H1 (cell line): ENCODE measurements at regions of chr7 and their contacts with region 1.

Region 1: GRCh38 chr7:123494193-123494796 is 40.1 kb downstream of the IQUB start:
- DNase-seq: no peak
- H3K4me3 ChIP-seq: no peak overlapping the region
- H3K27ac ChIP-seq: no peak overlapping the region
- H3K4me1 ChIP-seq: no peaks in the 10 kb centered on the region
- H3K27me3 ChIP-seq: no peaks in the 10 kb centered on the region
- CTCF ChIP-seq: peak in 2 of 3 experiments; percentile 30 to 41; a peak in 2 of 4 replicates
- EP300 ChIP-seq: no peak
- POLR2A ChIP-seq: no peak
- RAD21 ChIP-seq: peak in 1 of 2 experiments; percentile 72

Region 2: DNA sequence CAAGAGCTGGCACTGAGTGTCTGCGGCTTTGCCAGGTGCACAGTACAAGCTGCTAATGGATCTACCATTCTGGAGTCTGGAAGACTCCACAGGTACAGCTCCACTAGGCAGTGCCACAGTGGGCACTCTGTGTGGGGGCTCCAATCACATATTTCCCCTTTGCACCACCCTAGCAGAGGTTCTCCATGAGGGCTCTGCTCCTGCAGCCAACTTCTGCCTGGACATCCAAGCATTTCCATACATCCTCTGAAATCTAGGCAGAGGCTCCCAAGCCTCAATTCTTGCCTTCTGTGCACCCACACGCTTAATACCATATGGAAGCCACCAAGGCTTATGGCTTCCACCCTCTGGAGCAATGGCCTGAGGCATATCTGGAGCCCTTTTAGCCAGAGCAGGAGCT is 10.9 kb after region 1 on chr7:
- CTCF ChIA-PET with region 1: interaction called, 15 read pairs
- POLR2A ChIA-PET with region 1: no interaction called
- DNase-seq: no peak
- H3K4me3 ChIP-seq: no peak overlapping the region
- H3K27ac ChIP-seq: no peak overlapping the region
- H3K4me1 ChIP-seq: peaks cover 0 to 6% (median 0%) of the 10 kb centered on the region in 4 experiments; a peak in 2 of 7 replicates
- H3K27me3 ChIP-seq: no peaks in the 10 kb centered on the region; a peak in 1 of 7 replicates
- CTCF ChIP-seq: no peak
- EP300 ChIP-seq: no peak
- POLR2A ChIP-seq: no peak
- RAD21 ChIP-seq: no peak

Region 3: DNA sequence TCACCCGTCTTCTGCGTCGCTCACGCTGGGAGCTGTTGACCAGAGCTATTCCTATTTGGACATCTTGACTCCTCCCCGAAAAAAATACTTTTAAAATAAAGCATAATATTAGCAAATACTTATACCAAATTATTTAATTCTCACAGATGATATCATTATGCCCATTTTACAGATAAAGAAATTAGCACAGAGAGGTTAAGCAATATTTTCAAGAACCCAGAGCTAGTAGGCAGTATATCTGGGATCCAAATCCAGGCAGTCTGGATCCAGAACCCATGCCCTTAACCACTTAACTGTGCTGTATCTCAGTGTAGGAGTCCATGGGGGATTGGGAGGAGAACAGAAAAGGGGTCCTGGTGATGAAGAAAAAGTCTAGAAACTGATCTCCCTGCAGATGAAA is 34.0 kb after region 1 on chr7:
- CTCF ChIA-PET with region 1: interaction called, 11 read pairs
- POLR2A ChIA-PET with region 1: no interaction called
- DNase-seq: no peak
- H3K4me3 ChIP-seq: no peak overlapping the region
- H3K27ac ChIP-seq: no peak overlapping the region
- H3K4me1 ChIP-seq: peaks cover 0 to 3% (median 0%) of the 10 kb centered on the region in 4 experiments; a peak in 3 of 7 replicates
- H3K27me3 ChIP-seq: no peaks in the 10 kb centered on the region; a peak in 1 of 7 replicates
- CTCF ChIP-seq: no peak
- EP300 ChIP-seq: no peak
- POLR2A ChIP-seq: no peak
- RAD21 ChIP-seq: no peak

Region 4: DNA sequence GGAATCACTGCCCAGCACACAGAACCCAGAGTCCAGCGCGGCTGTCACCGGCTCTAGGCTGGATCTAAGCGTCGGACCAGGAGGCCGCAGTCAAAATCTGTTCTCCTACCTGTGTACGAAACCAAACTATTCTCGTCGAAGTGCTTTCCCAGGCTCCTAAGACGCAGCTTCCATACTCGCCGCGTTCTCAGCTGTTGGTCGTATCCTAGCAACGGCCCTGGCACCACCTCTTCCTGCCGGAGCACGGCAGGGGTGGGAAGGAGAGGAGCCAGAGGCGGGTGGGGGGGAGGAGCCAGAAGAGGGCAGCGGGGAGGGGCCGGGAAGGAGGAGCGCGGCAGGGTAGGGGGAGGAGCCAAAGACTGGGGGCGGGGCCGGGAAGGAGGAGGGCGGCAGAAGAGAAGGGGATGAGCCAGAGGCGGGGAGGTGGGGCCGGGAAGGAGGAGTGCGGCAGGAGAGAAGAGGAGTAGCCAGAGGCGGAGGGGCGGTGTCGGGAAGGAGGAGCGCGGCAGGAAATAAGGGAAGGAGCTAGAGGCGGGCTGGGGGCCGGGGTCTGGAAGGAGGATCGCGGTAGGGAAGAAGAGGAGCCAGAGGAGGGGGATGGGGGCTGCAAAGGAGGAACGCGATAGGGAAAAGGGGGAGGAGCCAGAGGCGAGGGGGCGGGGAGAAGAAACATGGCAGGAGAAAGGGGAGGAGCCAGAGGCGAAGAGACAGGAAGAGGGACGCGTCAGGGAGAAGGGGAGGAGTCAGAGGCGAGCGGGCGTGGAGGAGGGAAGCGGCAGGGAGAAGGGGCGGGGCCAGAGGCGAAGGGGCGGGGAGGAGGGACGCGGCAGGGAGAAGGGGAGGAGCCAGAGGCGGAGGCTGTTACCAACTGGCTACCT is 40.3 kb after region 1 on chr7 and contains the start of gene IQUB:
- CTCF ChIA-PET with region 1: interaction called, 25 read pairs
- POLR2A ChIA-PET with region 1: interaction called, 4 read pairs
- DNase-seq: peak; percentile 91 to 97
- H3K4me3 ChIP-seq: peak within 1 kb of the TSS; percentile 61 to 81 (median 73)
- H3K27ac ChIP-seq: peak within 1 kb of the TSS; percentile 25; the same call in 1 of the 2 replicates
- H3K4me1 ChIP-seq: peaks cover 0 to 3% (median 3%) of the 10 kb centered on the region in 4 experiments; a peak in 3 of 7 replicates
- H3K27me3 ChIP-seq: peaks cover 0 to 2% (median 1%) of the 10 kb centered on the region in 4 experiments; a peak in 4 of 7 replicates
- CTCF ChIP-seq: no peak
- EP300 ChIP-seq: no peak
- POLR2A ChIP-seq: peak in 1 of 2 experiments; percentile 57; a peak in 2 of 3 replicates
- RAD21 ChIP-seq: no peak
- total RNA-seq, gene IQUB: 0.82 and 0.96 TPM in 2 replicates